Activated CD8-positive, alpha-beta T cell treated with anti-CD3 and anti-CD28 coated beads, Interleukin-2, amount 10 ng/mL, durations not matched to agents 7 days and 5 days (primary cell): ENCODE measurements at regions of chr2 and their contacts with region 1.

Region 1: DNA sequence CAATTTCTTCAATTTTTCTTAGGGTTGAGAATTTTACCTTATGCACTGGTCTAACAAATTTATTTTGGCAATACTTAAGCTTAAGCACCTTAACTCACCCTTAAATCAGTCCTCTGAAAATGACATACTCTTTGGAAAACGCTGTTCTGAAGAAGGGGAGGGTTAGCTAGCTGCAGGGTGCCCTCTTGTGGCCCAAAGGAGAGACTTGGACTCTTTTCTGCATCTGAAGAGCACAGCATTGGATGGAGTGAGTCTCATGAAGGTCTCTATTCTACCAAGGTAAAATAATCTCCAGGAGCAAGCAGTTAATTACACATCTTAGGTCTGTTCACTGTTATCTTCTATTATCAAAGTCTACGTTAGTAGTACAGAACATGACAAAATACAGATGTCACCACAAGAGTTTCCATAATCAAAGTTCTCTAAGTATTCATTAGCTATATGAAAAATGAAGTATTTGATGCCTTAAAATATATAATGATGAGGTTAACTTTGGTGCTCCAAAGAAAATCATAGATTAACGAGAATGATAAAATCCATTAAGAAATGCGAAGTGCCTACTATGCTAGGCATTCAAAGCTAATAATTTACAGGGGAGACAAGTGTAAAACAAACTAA is 24.4 kb downstream of the PUM2 start:
- DNase-seq: peak; percentile 66
- ATAC-seq: peak; percentile 79
- H3K4me3 Mint-ChIP-seq: no peak overlapping the region
- H3K27ac Mint-ChIP-seq: no peak overlapping the region
- H3K4me1 Mint-ChIP-seq: peaks cover 59% of the 10 kb centered on the region
- H3K27me3 Mint-ChIP-seq: no peaks in the 10 kb centered on the region

Region 2: GRCh38 chr2:20093263-20094141 is 232.8 kb before region 1 on chr2:
- CTCF ChIA-PET with region 1: no interaction called
- POLR2A ChIA-PET with region 1: no interaction called
- DNase-seq: no peak
- ATAC-seq: no peak
- H3K4me3 Mint-ChIP-seq: no peak overlapping the region
- H3K27ac Mint-ChIP-seq: no peak overlapping the region
- H3K4me1 Mint-ChIP-seq: no peaks in the 10 kb centered on the region
- H3K27me3 Mint-ChIP-seq: no peaks in the 10 kb centered on the region

Region 3: GRCh38 chr2:20304411-20304810 is 21.9 kb before region 1 on chr2:
- CTCF ChIA-PET with region 1: interaction called, 11 read pairs
- POLR2A ChIA-PET with region 1: interaction called, 4 read pairs
- DNase-seq: no peak
- ATAC-seq: no peak
- H3K4me3 Mint-ChIP-seq: no peak overlapping the region
- H3K27ac Mint-ChIP-seq: no peak overlapping the region
- H3K4me1 Mint-ChIP-seq: peaks cover 2% of the 10 kb centered on the region
- H3K27me3 Mint-ChIP-seq: no peaks in the 10 kb centered on the region

Region 4: GRCh38 chr2:20343128-20343527 is 16.9 kb after region 1 on chr2:
- CTCF ChIA-PET with region 1: interaction called, 67 read pairs
- POLR2A ChIA-PET with region 1: interaction called, 4 read pairs
- DNase-seq: no peak
- ATAC-seq: no peak
- H3K4me3 Mint-ChIP-seq: no peak overlapping the region
- H3K27ac Mint-ChIP-seq: no peak overlapping the region
- H3K4me1 Mint-ChIP-seq: peaks cover 65% of the 10 kb centered on the region
- H3K27me3 Mint-ChIP-seq: no peaks in the 10 kb centered on the region

Region 5: DNA sequence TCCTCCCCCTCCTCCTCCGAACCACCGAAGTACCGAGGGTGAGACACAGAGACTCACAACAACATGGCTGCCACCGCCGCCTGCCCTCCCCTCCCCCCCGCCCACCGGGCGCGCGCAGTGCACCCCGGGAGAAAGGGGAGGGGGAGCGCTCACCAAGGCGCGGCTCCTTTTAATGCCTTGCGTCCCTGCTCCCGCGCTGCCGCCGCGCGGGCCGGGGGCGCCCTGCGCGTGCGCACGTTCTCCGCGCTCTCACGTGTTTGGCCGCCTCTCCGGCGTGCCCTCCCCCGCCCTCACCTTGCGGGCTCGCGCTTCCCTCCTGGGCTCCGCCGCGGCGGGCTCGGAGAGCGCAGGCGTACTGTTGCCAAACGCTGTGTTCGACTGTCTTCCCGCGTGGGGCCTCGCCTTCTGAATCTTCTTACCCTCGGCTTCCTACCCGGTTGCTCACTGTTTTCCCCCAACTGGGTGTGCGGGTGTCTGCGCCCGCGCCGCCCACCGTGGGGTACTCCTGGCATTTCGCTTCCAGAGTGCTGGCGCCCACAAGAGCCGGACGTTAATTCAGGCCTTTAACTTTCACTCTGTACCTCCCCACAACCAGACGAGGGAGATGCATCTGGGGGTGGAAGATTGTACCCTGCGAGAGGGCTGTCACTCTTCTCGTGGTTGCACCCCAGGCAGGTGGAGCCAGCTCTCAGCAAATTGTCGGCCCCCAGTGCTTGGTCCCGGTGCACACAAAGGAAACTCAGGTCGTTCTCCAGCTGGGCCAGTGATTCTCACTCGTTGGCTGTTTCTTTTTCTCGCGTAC is 24.7 kb after region 1 on chr2 and contains the start of gene PUM2:
- CTCF ChIA-PET with region 1: interaction called, 67 read pairs
- POLR2A ChIA-PET with region 1: interaction called, 4 read pairs
- DNase-seq: peak; percentile 95
- ATAC-seq: peak; percentile 86
- H3K4me3 Mint-ChIP-seq: peak within 1 kb of the TSS; percentile 78
- H3K27ac Mint-ChIP-seq: no peak within 1 kb of the TSS
- H3K4me1 Mint-ChIP-seq: peaks cover 29% of the 10 kb centered on the region
- H3K27me3 Mint-ChIP-seq: no peaks in the 10 kb centered on the region
- total RNA-seq, gene PUM2: 123 to 129 TPM

Region 6: GRCh38 chr2:20381444-20381843 is 55.2 kb after region 1 on chr2:
- CTCF ChIA-PET with region 1: interaction called, 28 read pairs
- POLR2A ChIA-PET with region 1: no interaction called
- DNase-seq: no peak
- ATAC-seq: no peak
- H3K4me3 Mint-ChIP-seq: no peak overlapping the region
- H3K27ac Mint-ChIP-seq: no peak overlapping the region
- H3K4me1 Mint-ChIP-seq: peaks cover 2% of the 10 kb centered on the region
- H3K27me3 Mint-ChIP-seq: peaks cover 14% of the 10 kb centered on the region

Region 7: DNA sequence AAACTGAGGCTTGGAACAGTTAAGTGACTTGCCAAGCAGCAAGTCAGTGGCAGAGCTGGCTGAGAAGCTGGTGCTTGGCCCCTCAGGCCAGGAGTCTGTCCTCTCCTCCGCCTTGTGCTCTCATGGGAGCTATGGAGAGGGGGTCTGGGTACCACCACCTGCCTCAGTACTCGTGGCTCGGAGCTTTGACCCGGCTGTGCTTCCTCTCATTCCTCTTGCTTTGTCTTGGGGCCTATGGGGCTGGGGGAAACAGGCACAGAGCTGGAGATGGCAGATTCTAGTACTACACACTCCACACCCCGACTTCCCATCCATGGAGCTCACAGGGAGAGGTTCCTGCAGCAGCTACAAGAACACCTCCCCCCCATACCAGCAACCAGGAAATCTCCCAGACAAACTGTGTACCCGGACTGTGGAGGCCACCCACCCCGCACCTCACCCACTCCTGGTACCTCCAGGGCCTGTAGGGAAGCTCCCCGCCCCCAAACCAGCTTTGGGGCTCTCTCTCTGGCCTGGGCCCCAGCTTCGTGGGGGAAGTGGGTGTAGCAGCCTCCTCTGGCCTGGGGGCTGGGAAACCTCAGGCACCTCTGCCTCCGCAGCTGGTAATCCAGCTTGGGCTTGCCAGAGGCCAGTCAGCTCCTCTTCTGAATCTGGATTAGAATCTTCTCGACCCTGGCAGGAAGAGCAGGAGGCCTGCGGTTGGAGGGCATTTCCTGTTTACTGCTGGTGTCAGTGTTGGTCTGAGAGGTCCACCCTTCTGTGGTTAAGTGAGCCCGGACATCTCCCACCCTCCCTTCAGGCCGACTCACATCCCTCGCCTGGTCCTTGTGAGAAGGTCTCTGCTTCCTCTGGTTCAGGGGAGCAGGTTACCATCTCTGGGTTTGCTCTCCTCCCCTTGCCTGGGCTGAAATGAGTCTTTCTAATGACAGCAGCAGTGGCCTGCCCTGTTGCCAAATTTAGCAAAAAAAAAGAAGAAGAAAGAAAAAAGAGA is 98.3 kb after region 1 on chr2:
- CTCF ChIA-PET with region 1: interaction called, 22 read pairs
- POLR2A ChIA-PET with region 1: no interaction called
- DNase-seq: peak; percentile 43
- ATAC-seq: peak; percentile 56
- H3K4me3 Mint-ChIP-seq: peak overlapping the region; percentile 6
- H3K27ac Mint-ChIP-seq: peak overlapping the region; percentile 79
- H3K4me1 Mint-ChIP-seq: peaks cover 19% of the 10 kb centered on the region
- H3K27me3 Mint-ChIP-seq: peaks cover 6% of the 10 kb centered on the region